Natural killer cell (primary cell): ENCODE measurements at regions of chr14 and their contacts with region 1.

Region 1: GRCh38 chr14:52175982-52176502 is 91.5 kb upstream of the PTGDR start:
- DNase-seq: peak; percentile 50 to 82
- ATAC-seq: peak; percentile 85 to 95 (median 95)
- H3K4me3 ChIP-seq: no peak overlapping the region
- H3K4me3 Mint-ChIP-seq: peak overlapping the region; percentile 84
- H3K27ac ChIP-seq: peak overlapping the region; percentile 83
- H3K27ac Mint-ChIP-seq: peak overlapping the region; percentile 91 to 99
- H3K4me1 ChIP-seq: peaks cover 41% of the 10 kb centered on the region
- H3K4me1 Mint-ChIP-seq: peaks cover 61 to 69% of the 10 kb centered on the region in 2 donors
- H3K27me3 ChIP-seq: no peaks in the 10 kb centered on the region
- H3K27me3 Mint-ChIP-seq: no peaks in the 10 kb centered on the region
- CTCF ChIP-seq: no peak

Region 2: GRCh38 chr14:51860164-51860824 is 315.7 kb before region 1 on chr14 and contains the start of gene GNG2:
- intact Hi-C with region 1: loop called (anchors 5 kb)
- DNase-seq: peak; percentile 76 to 93
- ATAC-seq: peak; percentile 77 to 96 (median 91)
- H3K4me3 ChIP-seq: peak within 1 kb of the TSS; percentile 73
- H3K4me3 Mint-ChIP-seq: peak within 1 kb of the TSS; percentile 91
- H3K27ac ChIP-seq: peak within 1 kb of the TSS; percentile 82
- H3K27ac Mint-ChIP-seq: no peak within 1 kb of the TSS
- H3K4me1 ChIP-seq: peaks cover 28% of the 10 kb centered on the region
- H3K4me1 Mint-ChIP-seq: peaks cover 67 to 71% of the 10 kb centered on the region in 2 donors
- H3K27me3 ChIP-seq: no peaks in the 10 kb centered on the region
- H3K27me3 Mint-ChIP-seq: no peaks in the 10 kb centered on the region
- CTCF ChIP-seq: no peak
- total RNA-seq, gene GNG2: 552 to 653 (median 582) TPM

Region 3: DNA sequence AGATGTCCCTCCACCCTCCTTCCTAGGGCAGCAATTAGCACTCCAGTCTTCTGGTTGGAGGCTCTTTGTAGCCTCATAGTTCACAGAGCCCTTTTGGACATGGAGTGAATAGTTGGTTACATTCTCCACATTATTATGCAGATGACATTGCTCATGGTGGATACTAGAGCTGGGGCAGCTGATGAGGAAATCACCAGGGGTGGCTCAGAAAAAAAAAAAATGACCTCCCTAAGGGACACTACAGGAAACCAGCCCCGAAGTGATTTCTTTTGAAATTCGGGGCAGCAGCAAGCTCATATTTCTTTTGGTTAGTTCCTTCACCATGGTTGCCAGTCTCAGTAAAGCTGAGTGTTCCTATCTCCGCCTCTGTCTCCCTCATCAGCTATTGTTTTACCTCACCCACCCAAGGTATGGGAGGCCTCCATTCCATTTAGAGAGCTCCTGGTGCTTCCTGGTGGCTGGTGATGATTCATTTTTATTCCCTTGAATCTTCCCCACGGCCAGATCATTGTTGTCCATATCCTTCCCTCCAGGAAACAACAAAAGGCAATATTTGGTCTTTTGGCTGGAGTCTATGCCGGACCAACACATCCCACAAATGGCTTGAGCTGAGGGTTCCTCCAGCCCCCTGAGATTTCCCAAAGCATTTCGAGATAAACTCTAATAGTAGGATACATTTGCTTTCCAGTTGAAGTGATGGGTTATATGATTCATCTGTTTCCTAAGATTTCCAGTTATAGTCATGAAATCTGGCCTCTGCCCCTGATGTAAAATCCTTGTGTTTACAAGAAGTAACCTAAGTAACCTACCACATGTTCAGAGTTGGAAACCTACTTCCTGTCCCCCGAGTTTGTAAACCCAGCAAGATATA is 51.0 kb before region 1 on chr14:
- intact Hi-C with region 1: loop called (anchors 10 kb)
- DNase-seq: peak in 1 of 2 donors; percentile 41
- ATAC-seq: peak; percentile 62 to 72 (median 67)
- H3K4me3 ChIP-seq: no peak overlapping the region
- H3K4me3 Mint-ChIP-seq: peak overlapping the region; percentile 77
- H3K27ac ChIP-seq: no peak overlapping the region
- H3K27ac Mint-ChIP-seq: peak overlapping the region in 1 of 2 donors; percentile 86
- H3K4me1 ChIP-seq: peaks cover 16% of the 10 kb centered on the region
- H3K4me1 Mint-ChIP-seq: peaks cover 19 to 28% of the 10 kb centered on the region in 2 donors
- H3K27me3 ChIP-seq: no peaks in the 10 kb centered on the region
- H3K27me3 Mint-ChIP-seq: peaks cover 25 to 27% of the 10 kb centered on the region in 2 donors
- CTCF ChIP-seq: no peak

Region 4: DNA sequence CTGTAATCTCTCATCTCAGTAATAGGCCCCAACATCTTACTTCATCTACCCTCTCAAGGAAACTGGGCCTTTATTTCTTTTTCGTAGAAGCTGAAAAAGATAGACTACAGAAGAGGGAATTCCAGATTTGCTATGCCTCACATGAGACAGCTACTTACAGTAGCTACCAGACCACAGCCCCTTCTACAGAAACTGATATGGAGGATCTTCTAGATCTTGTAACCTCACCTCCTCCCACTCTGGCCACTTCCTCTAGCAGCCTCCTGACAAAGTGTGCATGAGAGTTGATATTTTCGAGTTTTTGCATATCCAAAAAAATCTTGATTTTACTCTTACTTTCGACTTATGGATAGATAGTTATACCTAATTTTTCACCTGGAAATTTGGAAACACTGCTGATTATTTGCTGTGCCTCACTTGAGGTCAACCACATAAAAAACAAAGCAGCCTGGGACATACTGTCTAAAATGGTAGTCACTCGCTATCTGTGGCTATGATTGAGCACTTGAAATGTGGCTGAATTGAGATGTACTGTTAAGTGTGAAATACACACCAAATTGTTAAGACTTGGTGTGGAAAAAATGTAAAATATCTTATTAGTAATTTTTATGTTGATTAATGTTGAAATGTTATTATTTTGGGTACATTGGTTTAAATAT is 20.9 kb before region 1 on chr14:
- intact Hi-C with region 1: loop called (anchors 1 kb)
- DNase-seq: peak in 1 of 2 donors; percentile 46
- ATAC-seq: peak; percentile 92 to 96 (median 94)
- H3K4me3 ChIP-seq: no peak overlapping the region
- H3K4me3 Mint-ChIP-seq: peak overlapping the region; percentile 82
- H3K27ac ChIP-seq: peak overlapping the region; percentile 55
- H3K27ac Mint-ChIP-seq: peak overlapping the region; percentile 86 to 90
- H3K4me1 ChIP-seq: peaks cover 58% of the 10 kb centered on the region
- H3K4me1 Mint-ChIP-seq: peaks cover 89 to 91% of the 10 kb centered on the region in 2 donors
- H3K27me3 ChIP-seq: no peaks in the 10 kb centered on the region
- H3K27me3 Mint-ChIP-seq: no peaks in the 10 kb centered on the region
- CTCF ChIP-seq: no peak

Region 5: GRCh38 chr14:52202151-52202550 is 26.1 kb after region 1 on chr14:
- intact Hi-C with region 1: no loop called
- DNase-seq: no peak
- ATAC-seq: no peak
- H3K4me3 ChIP-seq: no peak overlapping the region
- H3K4me3 Mint-ChIP-seq: no peak overlapping the region
- H3K27ac ChIP-seq: no peak overlapping the region
- H3K27ac Mint-ChIP-seq: no peak overlapping the region
- H3K4me1 ChIP-seq: no peaks in the 10 kb centered on the region
- H3K4me1 Mint-ChIP-seq: peaks cover 8 to 12% of the 10 kb centered on the region in 2 donors
- H3K27me3 ChIP-seq: no peaks in the 10 kb centered on the region
- H3K27me3 Mint-ChIP-seq: no peaks in the 10 kb centered on the region
- CTCF ChIP-seq: no peak

Region 6: DNA sequence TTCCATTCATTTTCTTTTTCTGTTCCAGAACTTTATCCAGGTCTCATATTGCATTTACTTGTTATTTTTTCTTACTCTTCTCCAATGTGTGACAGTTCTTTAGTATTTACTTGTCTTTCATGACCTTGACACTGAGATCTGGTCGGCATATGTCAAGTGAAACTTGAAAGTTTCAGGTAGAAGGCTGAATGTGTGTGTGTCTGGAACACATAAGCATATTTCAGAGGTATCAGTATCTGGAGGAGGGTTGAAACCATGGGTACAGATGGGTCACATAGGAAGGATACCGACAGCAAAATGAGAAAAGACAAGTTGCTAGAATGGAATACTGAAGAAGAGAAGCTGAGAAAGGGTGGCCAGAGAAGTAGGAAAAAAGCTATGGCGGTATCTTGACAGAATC is 69.0 kb after region 1 on chr14:
- intact Hi-C with region 1: loop called (anchors 1 kb)
- DNase-seq: no peak
- ATAC-seq: no peak
- H3K4me3 ChIP-seq: no peak overlapping the region
- H3K4me3 Mint-ChIP-seq: no peak overlapping the region
- H3K27ac ChIP-seq: no peak overlapping the region
- H3K27ac Mint-ChIP-seq: peak overlapping the region; percentile 84 to 85
- H3K4me1 ChIP-seq: peaks cover 34% of the 10 kb centered on the region
- H3K4me1 Mint-ChIP-seq: peaks cover 69 to 75% of the 10 kb centered on the region in 2 donors
- H3K27me3 ChIP-seq: no peaks in the 10 kb centered on the region
- H3K27me3 Mint-ChIP-seq: no peaks in the 10 kb centered on the region
- CTCF ChIP-seq: no peak

Region 7: DNA sequence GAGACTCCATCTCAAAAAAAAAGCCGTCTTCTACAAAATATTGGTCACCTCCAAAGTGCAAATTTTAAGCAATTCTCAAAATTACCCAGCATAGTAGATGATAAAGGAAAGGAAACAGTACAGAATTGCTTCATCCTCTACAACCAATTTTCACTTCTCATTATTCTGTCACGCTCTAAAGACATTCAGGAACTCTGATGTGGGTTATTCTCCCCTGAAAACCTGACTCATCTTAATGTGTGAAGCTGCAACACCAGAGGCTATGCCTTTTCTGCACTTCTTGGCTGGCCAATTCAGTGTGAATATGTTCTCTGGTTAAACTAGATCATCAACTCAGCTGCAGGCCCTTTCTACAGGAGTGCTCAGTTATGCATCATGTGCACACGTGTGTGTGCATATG is 149.1 kb after region 1 on chr14:
- intact Hi-C with region 1: loop called (anchors 2 kb)
- DNase-seq: peak; percentile 37 to 63
- ATAC-seq: peak; percentile 83 to 94 (median 92)
- H3K4me3 ChIP-seq: no peak overlapping the region
- H3K4me3 Mint-ChIP-seq: peak overlapping the region; percentile 88
- H3K27ac ChIP-seq: peak overlapping the region; percentile 53
- H3K27ac Mint-ChIP-seq: peak overlapping the region; percentile 83 to 95
- H3K4me1 ChIP-seq: peaks cover 47% of the 10 kb centered on the region
- H3K4me1 Mint-ChIP-seq: peaks cover 87 to 89% of the 10 kb centered on the region in 2 donors
- H3K27me3 ChIP-seq: no peaks in the 10 kb centered on the region
- H3K27me3 Mint-ChIP-seq: no peaks in the 10 kb centered on the region
- CTCF ChIP-seq: no peak